B cell (primary cell): ENCODE measurements at regions of chr16 and their contacts with region 1.

Region 1: DNA sequence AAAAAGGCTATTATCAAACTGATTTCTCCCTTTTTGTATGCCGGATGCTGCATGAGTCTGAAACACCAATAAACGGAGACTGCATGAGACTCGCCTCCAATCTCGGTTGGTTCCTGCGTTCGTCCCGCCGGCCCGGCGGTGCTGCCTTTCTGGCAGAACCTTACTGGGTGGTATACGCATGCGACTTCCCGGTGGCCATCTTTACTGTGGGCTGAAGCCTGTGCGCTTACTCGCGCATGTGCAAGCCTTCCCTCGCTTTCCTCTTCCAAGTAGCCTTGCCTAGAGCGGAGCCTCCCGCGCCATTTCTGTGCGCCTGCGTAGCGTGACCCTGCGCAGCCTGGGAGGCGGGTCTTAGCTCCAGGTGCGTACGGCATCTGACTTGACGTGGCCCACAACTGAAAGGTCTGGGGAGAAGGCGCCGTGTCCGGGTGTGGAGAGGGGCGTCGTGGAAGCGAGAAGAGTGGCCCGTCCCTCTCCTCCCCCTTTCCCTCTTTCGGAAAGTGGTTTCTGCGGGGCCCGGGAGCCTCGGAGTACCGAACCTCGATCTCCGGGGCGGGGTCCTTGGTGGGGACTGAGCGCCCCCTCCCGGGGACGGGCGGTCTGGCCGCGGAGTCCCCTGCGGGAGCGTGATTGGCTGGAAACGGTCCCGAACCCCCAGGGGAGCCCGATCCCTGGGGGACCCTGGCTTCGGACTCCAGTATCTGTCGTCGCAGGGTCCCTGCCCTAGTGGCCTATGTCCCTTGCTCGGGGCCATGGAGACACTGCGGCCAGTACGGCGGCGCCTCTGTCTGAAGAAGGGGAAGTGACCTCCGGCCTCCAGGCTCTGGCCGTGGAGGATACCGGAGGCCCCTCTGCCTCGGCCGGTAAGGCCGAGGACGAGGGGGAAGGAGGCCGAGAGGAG is at the start of gene PAGR1:
- DNase-seq: peak; percentile 100
- ATAC-seq: peak; percentile 76
- H3K4me3 ChIP-seq: peak within 1 kb of the TSS; percentile 73 to 93 (median 84)
- H3K4me3 Mint-ChIP-seq: peak within 1 kb of the TSS; percentile 97
- H3K27ac ChIP-seq: peak within 1 kb of the TSS; percentile 88
- H3K27ac Mint-ChIP-seq: peak within 1 kb of the TSS; percentile 98
- H3K4me1 ChIP-seq: peaks cover 40 to 60% of the 10 kb centered on the region in 2 donors
- H3K4me1 Mint-ChIP-seq: peaks cover 65% of the 10 kb centered on the region
- H3K27me3 ChIP-seq: peaks cover 0 to 13% (median 5%) of the 10 kb centered on the region in 4 experiments
- H3K27me3 Mint-ChIP-seq: no peaks in the 10 kb centered on the region
- CTCF ChIP-seq: peak; percentile 97
- total RNA-seq, gene PAGR1: 26.7 and 28.4 TPM in 2 replicates

Region 2: GRCh38 chr16:29726845-29727377 is 89.1 kb before region 1 on chr16:
- CTCF ChIA-PET with region 1: no interaction called
- POLR2A ChIA-PET with region 1: no interaction called
- intact Hi-C with region 1: no loop called
- DNase-seq: no peak
- ATAC-seq: no peak
- H3K4me3 ChIP-seq: no peak overlapping the region
- H3K4me3 Mint-ChIP-seq: no peak overlapping the region
- H3K27ac ChIP-seq: no peak overlapping the region
- H3K27ac Mint-ChIP-seq: no peak overlapping the region
- H3K4me1 ChIP-seq: peaks cover 8 to 27% of the 10 kb centered on the region in 2 donors
- H3K4me1 Mint-ChIP-seq: peaks cover 19% of the 10 kb centered on the region
- H3K27me3 ChIP-seq: no peaks in the 10 kb centered on the region
- H3K27me3 Mint-ChIP-seq: no peaks in the 10 kb centered on the region
- CTCF ChIP-seq: no peak

Region 3: DNA sequence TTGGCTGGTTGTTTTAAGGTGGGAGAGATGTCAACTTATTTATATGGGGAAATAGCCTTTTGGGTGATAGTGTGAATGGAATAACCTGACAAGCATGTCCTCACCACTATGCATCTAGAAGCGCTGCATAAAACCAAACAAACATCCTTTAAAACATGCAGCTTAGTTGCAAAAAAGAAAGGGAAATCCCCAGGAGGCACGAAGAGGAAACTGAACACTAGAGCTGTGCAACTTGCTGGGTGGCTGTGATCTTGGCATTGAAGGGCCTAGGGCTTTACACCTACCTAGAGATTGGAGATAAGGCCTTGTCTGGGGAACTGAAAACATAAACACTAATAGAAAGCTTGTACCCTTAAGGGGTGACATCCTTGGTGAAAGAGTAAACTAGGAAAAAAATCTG is 77.5 kb before region 1 on chr16:
- CTCF ChIA-PET with region 1: no interaction called
- POLR2A ChIA-PET with region 1: no interaction called
- intact Hi-C with region 1: loop called (anchors 2 kb)
- DNase-seq: peak; percentile 74
- ATAC-seq: peak; percentile 91
- H3K4me3 ChIP-seq: peak overlapping the region in 1 of 5 experiments; percentile 9
- H3K4me3 Mint-ChIP-seq: peak overlapping the region; percentile 66
- H3K27ac ChIP-seq: peak overlapping the region in 1 of 2 donors; percentile 47
- H3K27ac Mint-ChIP-seq: peak overlapping the region; percentile 90
- H3K4me1 ChIP-seq: peaks cover 47 to 62% of the 10 kb centered on the region in 2 donors
- H3K4me1 Mint-ChIP-seq: peaks cover 73% of the 10 kb centered on the region
- H3K27me3 ChIP-seq: no peaks in the 10 kb centered on the region
- H3K27me3 Mint-ChIP-seq: no peaks in the 10 kb centered on the region
- CTCF ChIP-seq: no peak

Region 4: GRCh38 chr16:29745853-29746345 is 70.1 kb before region 1 on chr16 and contains the start of gene C16orf54:
- CTCF ChIA-PET with region 1: interaction called, 3 read pairs
- POLR2A ChIA-PET with region 1: interaction called, 11 read pairs
- intact Hi-C with region 1: loop called (anchors 1 kb)
- DNase-seq: peak; percentile 93
- ATAC-seq: peak; percentile 90
- H3K4me3 ChIP-seq: peak within 1 kb of the TSS; percentile 91 to 100 (median 97)
- H3K4me3 Mint-ChIP-seq: peak within 1 kb of the TSS; percentile 99
- H3K27ac ChIP-seq: peak within 1 kb of the TSS; percentile 95
- H3K27ac Mint-ChIP-seq: peak within 1 kb of the TSS; percentile 99
- H3K4me1 ChIP-seq: peaks cover 44 to 59% of the 10 kb centered on the region in 2 donors
- H3K4me1 Mint-ChIP-seq: peaks cover 64% of the 10 kb centered on the region
- H3K27me3 ChIP-seq: no peaks in the 10 kb centered on the region
- H3K27me3 Mint-ChIP-seq: no peaks in the 10 kb centered on the region
- CTCF ChIP-seq: no peak
- total RNA-seq, gene C16orf54: 64.4 and 68.3 TPM in 2 replicates

Region 5: DNA sequence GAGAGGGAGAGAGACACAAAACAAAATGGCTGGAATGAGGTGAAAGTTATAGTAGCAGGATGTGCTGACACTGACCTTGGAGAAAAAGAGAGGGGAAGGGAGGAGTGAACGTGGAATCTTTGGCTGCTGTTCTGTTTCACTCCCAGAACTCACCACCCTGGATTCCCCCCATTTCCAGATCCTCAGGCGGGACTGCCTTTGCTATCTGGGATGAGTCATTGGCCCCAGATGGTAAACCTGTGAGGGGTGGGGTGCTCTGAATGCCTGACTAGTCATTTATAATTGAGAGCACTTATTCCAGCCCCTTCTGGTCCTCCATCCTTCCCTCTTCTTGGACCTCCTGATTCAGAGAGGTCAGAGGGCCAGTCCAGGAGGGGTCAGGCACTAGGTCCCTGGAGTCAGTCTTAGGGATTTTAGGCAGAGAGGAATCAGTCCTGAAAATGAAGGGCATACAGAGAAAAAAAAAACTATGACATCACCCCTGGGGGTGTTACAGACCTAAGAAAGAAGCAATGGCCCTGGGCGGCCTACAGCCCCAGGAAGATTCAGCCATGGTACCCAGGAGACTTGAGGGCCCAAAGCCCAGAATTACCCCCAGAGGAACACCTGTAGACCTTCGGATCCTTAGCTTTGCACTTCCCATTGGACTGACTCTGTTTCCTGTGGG is 40.2 kb before region 1 on chr16:
- CTCF ChIA-PET with region 1: no interaction called
- POLR2A ChIA-PET with region 1: no interaction called
- intact Hi-C with region 1: no loop called
- DNase-seq: no peak
- ATAC-seq: no peak
- H3K4me3 ChIP-seq: no peak overlapping the region
- H3K4me3 Mint-ChIP-seq: no peak overlapping the region
- H3K27ac ChIP-seq: no peak overlapping the region
- H3K27ac Mint-ChIP-seq: no peak overlapping the region
- H3K4me1 ChIP-seq: no peaks in the 10 kb centered on the region
- H3K4me1 Mint-ChIP-seq: no peaks in the 10 kb centered on the region
- H3K27me3 ChIP-seq: no peaks in the 10 kb centered on the region
- H3K27me3 Mint-ChIP-seq: no peaks in the 10 kb centered on the region
- CTCF ChIP-seq: no peak

Region 6: GRCh38 chr16:29805378-29806098 is 10.5 kb before region 1 on chr16:
- CTCF ChIA-PET with region 1: interaction called, 66 read pairs
- POLR2A ChIA-PET with region 1: interaction called, 31 read pairs
- intact Hi-C with region 1: loop called (anchors 1 kb)
- DNase-seq: peak; percentile 99
- ATAC-seq: peak; percentile 69
- H3K4me3 ChIP-seq: peak overlapping the region; percentile 63 to 95 (median 89)
- H3K4me3 Mint-ChIP-seq: peak overlapping the region; percentile 98
- H3K27ac ChIP-seq: peak overlapping the region; percentile 87 to 91
- H3K27ac Mint-ChIP-seq: peak overlapping the region; percentile 100
- H3K4me1 ChIP-seq: peaks cover 43 to 48% of the 10 kb centered on the region in 2 donors
- H3K4me1 Mint-ChIP-seq: peaks cover 44% of the 10 kb centered on the region
- H3K27me3 ChIP-seq: no peaks in the 10 kb centered on the region
- H3K27me3 Mint-ChIP-seq: no peaks in the 10 kb centered on the region
- CTCF ChIP-seq: peak; percentile 13

Region 7: DNA sequence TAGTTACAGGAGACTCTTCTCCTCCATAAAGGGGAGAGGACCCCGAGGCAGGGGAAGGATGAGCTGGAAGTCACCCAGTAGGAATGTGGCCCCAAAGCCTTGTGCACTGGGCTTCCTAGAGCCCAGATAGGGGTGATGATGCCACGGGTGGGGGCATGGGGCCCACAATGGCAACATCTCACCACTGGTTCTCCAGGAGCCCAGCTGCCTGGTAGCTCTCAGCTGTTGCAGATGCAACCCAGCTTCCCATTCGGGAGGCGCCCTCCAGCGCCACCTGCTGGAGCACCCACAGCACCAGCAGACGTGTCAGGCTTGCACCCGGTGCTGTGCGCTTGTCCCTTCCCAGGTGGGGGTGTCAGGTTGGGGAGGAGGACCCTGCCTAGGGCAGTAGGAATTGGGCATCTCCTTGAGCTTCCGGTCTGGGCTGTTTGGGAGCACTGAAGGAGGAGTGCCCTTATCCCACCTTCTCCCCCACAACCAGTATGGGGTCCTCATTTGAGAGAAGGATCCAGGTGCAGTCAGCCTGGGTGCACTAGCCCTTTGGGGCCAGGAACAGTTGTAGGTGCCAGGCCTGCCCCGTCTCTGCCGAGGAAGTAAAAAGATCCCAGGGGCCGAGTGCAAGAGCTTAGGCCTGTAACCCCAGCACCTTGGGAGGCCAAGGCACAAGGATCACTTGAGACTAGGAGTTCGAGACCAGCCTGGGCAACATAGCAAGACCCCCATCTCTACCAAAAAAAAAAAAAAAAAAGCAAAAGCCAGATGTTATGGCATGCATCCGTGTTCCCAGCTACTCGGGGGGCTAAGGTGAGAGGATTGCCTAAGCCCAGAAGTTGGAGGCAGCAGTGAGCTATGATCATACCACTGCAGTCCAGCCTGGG is 32.6 kb after region 1 on chr16:
- CTCF ChIA-PET with region 1: interaction called, 38 read pairs
- POLR2A ChIA-PET with region 1: interaction called, 3 read pairs
- intact Hi-C with region 1: loop called (anchors 2 kb)
- DNase-seq: peak; percentile 75
- ATAC-seq: peak; percentile 79
- H3K4me3 ChIP-seq: no peak overlapping the region
- H3K4me3 Mint-ChIP-seq: no peak overlapping the region
- H3K27ac ChIP-seq: no peak overlapping the region
- H3K27ac Mint-ChIP-seq: no peak overlapping the region
- H3K4me1 ChIP-seq: no peaks in the 10 kb centered on the region
- H3K4me1 Mint-ChIP-seq: no peaks in the 10 kb centered on the region
- H3K27me3 ChIP-seq: no peaks in the 10 kb centered on the region
- H3K27me3 Mint-ChIP-seq: no peaks in the 10 kb centered on the region
- CTCF ChIP-seq: peak; percentile 78

Region 8: GRCh38 chr16:29973384-29974246 is 157.6 kb after region 1 on chr16 and contains the start of gene TAOK2:
- CTCF ChIA-PET with region 1: interaction called, 3 read pairs
- POLR2A ChIA-PET with region 1: no interaction called
- intact Hi-C with region 1: loop called (anchors 5 kb)
- DNase-seq: peak; percentile 98
- ATAC-seq: peak; percentile 99
- H3K4me3 ChIP-seq: peak within 1 kb of the TSS; percentile 79 to 100 (median 99)
- H3K4me3 Mint-ChIP-seq: peak within 1 kb of the TSS; percentile 95
- H3K27ac ChIP-seq: peak within 1 kb of the TSS; percentile 73 to 79
- H3K27ac Mint-ChIP-seq: peak within 1 kb of the TSS; percentile 94
- H3K4me1 ChIP-seq: peaks cover 31 to 38% of the 10 kb centered on the region in 2 donors
- H3K4me1 Mint-ChIP-seq: peaks cover 36% of the 10 kb centered on the region
- H3K27me3 ChIP-seq: no peaks in the 10 kb centered on the region
- H3K27me3 Mint-ChIP-seq: no peaks in the 10 kb centered on the region
- CTCF ChIP-seq: no peak
- total RNA-seq, gene TAOK2: 50.8 and 51.9 TPM in 2 replicates

Region 9: GRCh38 chr16:29995911-29996772 is 180.1 kb after region 1 on chr16 and contains the start of gene INO80E:
- CTCF ChIA-PET with region 1: no interaction called
- POLR2A ChIA-PET with region 1: no interaction called
- intact Hi-C with region 1: loop called (anchors 1 kb)
- DNase-seq: peak; percentile 97
- ATAC-seq: peak; percentile 96
- H3K4me3 ChIP-seq: peak within 1 kb of the TSS; percentile 89 to 100 (median 98)
- H3K4me3 Mint-ChIP-seq: peak within 1 kb of the TSS; percentile 98
- H3K27ac ChIP-seq: peak within 1 kb of the TSS; percentile 94 to 97
- H3K27ac Mint-ChIP-seq: peak within 1 kb of the TSS; percentile 94
- H3K4me1 ChIP-seq: peaks cover 15 to 22% of the 10 kb centered on the region in 2 donors
- H3K4me1 Mint-ChIP-seq: peaks cover 43% of the 10 kb centered on the region
- H3K27me3 ChIP-seq: no peaks in the 10 kb centered on the region
- H3K27me3 Mint-ChIP-seq: no peaks in the 10 kb centered on the region
- CTCF ChIP-seq: no peak
- total RNA-seq, gene INO80E: 113 and 119 TPM in 2 replicates